ENCODE measurements at regions of chr19 and their contacts with region 1.

Region 1: DNA sequence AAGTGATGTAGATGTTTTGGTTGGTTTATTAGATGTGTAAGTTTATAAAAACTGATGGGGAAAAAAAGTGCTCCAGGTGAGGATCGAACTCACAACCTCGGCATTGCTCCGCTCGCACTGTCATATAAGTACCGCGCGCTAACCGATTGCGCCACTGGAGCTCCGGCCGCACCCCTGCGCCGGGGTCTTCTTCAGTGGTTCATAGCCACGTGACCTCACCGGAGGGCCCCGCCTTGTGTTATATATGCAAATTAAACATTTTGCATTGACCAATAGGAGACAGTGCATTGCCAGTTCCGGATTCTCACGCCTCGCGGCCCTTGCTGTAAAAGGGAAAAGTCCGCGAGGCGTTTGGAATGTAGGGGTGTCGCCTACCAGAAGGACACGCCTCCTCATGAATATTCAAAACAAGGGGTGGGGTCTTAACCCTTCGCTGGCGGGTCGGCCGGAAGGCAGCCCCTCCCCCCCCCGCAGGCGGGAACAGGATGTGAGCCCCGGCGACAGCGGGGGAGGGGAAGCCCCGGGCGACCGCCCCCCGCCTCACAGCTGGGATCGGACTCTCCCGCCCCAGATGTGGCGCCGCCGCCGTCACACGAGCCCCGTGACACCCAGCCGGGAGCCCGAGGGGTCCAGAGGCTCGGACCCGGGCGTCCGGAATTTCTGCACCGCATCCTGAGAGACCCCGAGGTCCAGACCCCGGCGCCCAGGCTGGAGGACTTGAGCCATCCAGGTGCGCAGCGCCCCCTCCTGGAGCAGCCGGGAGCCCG is at the start of gene PLEKHG2:
- DNase-seq: peak; percentile 95
- H3K4me3 Mint-ChIP-seq: peak within 1 kb of the TSS; percentile 96
- H3K27ac Mint-ChIP-seq: peak within 1 kb of the TSS; percentile 86
- H3K4me1 Mint-ChIP-seq: peaks cover 46% of the 10 kb centered on the region
- H3K27me3 Mint-ChIP-seq: no peaks in the 10 kb centered on the region
- total RNA-seq, gene PLEKHG2: 43.9 and 47.3 TPM in 2 replicates

Region 2: DNA sequence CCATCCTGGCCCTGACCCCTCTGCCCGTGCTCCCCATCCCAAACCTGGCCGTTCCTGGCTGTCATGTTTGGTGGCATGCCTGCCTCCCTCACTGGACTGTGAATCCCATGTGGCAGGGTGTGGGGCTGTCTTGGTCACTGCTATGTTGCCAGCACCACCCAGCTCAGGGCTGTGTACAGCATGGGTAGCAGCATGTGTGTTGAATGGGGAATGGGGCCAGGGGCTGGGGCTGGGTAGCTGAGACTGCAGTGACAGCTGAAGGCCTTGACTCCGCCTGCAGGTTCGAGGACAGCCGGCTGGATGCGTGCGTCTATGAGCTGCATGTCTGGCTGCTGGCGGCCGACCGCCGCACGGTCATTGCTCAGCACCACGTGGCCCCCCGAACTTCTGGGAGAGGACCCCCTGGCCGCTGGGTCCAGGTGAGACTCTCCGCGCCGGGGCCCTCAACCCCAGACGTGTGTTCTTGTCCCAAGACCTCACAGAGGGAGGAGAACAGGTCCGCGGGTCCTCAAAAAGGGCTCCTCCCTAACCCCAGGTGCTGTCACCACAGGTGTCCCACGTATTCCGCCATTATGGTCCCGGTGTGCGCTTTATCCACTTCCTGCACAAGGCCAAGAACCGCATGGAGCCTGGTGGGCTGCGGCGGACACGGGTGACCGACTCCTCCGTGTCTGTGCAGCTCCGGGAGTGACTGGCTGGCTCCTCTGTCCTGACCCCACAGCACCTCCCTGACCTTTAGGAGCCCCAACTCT is 212.0 kb before region 1 on chr19:
- intact Hi-C with region 1: no loop called
- DNase-seq: no peak
- H3K4me3 Mint-ChIP-seq: no peak overlapping the region
- H3K27ac Mint-ChIP-seq: no peak overlapping the region
- H3K4me1 Mint-ChIP-seq: peaks cover 6% of the 10 kb centered on the region
- H3K27me3 Mint-ChIP-seq: peaks cover 53% of the 10 kb centered on the region

Region 3: DNA sequence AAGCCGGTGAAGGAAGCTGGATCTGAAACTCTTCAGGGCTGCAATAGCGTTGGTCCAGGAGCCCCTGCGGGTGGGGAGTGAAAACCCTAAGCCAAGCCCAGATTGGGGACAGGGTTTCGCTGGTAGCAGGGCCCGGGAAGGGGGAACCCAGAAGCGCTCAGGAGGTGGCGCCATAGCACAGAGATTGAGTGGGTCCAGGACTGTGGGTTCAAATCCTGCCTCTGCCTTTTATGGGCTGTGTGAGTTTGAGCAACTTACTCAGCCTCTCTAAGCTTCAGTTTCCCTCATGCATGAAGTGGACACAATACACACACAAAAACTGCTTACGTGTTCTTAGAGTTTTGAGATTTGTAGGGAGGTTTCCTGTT is 199.9 kb before region 1 on chr19:
- intact Hi-C with region 1: loop called (anchors 1 kb)
- DNase-seq: peak; percentile 38
- H3K4me3 Mint-ChIP-seq: no peak overlapping the region
- H3K27ac Mint-ChIP-seq: no peak overlapping the region
- H3K4me1 Mint-ChIP-seq: no peaks in the 10 kb centered on the region
- H3K27me3 Mint-ChIP-seq: peaks cover 4% of the 10 kb centered on the region

Region 4: DNA sequence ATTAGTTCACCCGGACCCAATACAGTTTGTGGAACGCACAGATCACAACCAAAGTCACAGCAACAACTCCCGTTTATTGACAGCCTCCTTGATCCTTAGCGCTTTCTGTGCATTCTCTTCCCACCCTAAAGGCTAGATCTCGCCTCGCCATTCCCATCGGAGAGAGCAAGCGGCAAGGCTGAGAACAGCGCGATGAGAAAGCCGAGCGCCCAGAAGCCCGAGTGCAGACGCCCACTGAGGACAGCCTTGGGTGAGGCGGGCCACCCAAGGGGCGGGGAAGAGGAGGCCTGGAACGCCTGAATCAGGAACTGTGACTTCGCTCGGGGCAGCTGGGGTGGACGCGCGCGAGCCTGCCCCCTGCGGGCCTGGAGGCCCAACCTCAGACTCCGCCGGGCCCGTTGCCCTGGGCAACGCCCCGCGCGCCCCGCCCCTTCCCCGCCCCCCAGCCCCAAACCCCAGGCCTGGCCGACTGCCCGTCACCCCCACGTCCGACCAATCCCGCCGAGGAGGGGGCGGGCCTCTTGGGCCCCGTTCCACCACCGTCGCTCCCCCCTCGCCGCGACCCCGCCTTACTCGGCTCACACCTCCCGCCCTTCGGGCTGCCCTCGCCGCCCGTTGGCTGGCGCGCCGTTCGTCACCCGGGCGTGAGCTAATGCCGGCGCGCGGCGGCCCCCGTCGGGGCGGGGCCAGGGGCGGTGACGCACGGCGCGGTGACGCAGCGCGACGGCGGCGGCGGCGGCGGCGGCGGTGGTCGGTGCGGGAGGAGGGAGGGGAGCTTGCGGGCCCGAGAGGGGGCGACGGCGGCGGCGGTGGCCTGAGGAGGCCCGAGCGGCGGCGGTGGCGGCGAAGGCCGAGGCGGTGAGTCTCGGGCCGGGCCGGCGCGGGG is 70.3 kb before region 1 on chr19 and contains the start of gene SAMD4B:
- intact Hi-C with region 1: loop called (anchors 1 kb)
- DNase-seq: peak; percentile 99
- H3K4me3 Mint-ChIP-seq: peak within 1 kb of the TSS; percentile 99
- H3K27ac Mint-ChIP-seq: peak within 1 kb of the TSS; percentile 96
- H3K4me1 Mint-ChIP-seq: peaks cover 73% of the 10 kb centered on the region
- H3K27me3 Mint-ChIP-seq: no peaks in the 10 kb centered on the region
- total RNA-seq, gene SAMD4B: 71.3 and 71.8 TPM in 2 replicates

Region 5: GRCh38 chr19:39379865-39380396 is 32.4 kb before region 1 on chr19:
- intact Hi-C with region 1: no loop called
- DNase-seq: no peak
- H3K4me3 Mint-ChIP-seq: no peak overlapping the region
- H3K27ac Mint-ChIP-seq: peak overlapping the region; percentile 36
- H3K4me1 Mint-ChIP-seq: no peaks in the 10 kb centered on the region
- H3K27me3 Mint-ChIP-seq: no peaks in the 10 kb centered on the region

Region 6: DNA sequence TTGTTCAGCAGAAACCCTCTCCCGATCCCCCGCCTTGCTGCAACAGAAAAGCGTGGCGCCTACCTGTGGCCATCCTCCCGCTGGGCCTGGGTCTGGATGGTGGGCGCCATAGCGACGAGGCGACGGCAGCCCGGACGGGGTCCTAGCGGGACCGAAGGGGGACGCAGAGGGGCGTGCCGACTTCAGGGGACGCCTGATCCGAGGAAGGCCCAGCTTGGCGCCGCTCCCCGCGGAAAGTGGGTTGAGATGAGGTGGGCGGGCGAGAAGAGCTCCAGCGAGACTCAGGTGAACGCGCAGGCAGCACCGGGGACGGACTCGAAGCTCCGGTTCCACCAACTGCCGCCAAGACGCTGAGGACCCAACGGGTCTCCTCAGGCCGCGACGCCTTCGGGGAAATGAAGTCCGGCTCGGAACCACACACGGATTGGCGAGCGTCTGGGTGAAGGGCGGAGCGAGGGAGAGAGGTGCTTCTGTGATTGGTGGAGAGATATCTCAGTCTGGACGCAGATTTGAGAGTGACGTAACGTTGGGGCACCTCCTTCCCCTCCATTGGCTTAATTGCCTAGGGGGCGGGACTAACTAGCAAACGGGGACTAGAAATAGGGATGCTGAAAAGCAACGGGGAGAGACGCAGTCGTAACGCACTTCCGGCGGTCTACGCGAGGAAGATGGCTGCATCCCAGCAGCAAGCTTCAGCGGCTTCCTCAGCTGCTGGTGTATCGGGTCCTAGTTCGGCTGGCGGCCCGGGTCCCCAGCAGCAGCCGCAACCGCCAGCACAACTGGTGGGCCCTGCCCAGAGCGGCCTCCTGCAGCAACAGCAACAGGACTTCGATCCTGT is 21.3 kb before region 1 on chr19 and contains the starts of genes MED29 and PAF1:
- intact Hi-C with region 1: loop called (anchors 1 kb)
- DNase-seq: peak; percentile 95
- H3K4me3 Mint-ChIP-seq: peak within 1 kb of the TSS; percentile 98
- H3K27ac Mint-ChIP-seq: peak within 1 kb of the TSS; percentile 93
- H3K4me1 Mint-ChIP-seq: peaks cover 31% of the 10 kb centered on the region
- H3K27me3 Mint-ChIP-seq: no peaks in the 10 kb centered on the region
- total RNA-seq, gene MED29: 37.5 and 45.8 TPM in 2 replicates
- total RNA-seq, gene PAF1: 54.8 and 57.3 TPM in 2 replicates

Region 7: GRCh38 chr19:39423258-39424086 is 11.2 kb after region 1 on chr19:
- intact Hi-C with region 1: no loop called
- DNase-seq: no peak
- H3K4me3 Mint-ChIP-seq: no peak overlapping the region
- H3K27ac Mint-ChIP-seq: no peak overlapping the region
- H3K4me1 Mint-ChIP-seq: no peaks in the 10 kb centered on the region
- H3K27me3 Mint-ChIP-seq: no peaks in the 10 kb centered on the region

Region 8: GRCh38 chr19:39435499-39436349 is 23.4 kb after region 1 on chr19 and contains the start of gene RPS16:
- intact Hi-C with region 1: loop called (anchors 1 kb)
- DNase-seq: peak; percentile 99
- H3K4me3 Mint-ChIP-seq: peak within 1 kb of the TSS; percentile 99
- H3K27ac Mint-ChIP-seq: peak within 1 kb of the TSS; percentile 99
- H3K4me1 Mint-ChIP-seq: peaks cover 37% of the 10 kb centered on the region
- H3K27me3 Mint-ChIP-seq: no peaks in the 10 kb centered on the region
- total RNA-seq, gene RPS16: 2,440 and 2,532 TPM in 2 replicates

Region 9: DNA sequence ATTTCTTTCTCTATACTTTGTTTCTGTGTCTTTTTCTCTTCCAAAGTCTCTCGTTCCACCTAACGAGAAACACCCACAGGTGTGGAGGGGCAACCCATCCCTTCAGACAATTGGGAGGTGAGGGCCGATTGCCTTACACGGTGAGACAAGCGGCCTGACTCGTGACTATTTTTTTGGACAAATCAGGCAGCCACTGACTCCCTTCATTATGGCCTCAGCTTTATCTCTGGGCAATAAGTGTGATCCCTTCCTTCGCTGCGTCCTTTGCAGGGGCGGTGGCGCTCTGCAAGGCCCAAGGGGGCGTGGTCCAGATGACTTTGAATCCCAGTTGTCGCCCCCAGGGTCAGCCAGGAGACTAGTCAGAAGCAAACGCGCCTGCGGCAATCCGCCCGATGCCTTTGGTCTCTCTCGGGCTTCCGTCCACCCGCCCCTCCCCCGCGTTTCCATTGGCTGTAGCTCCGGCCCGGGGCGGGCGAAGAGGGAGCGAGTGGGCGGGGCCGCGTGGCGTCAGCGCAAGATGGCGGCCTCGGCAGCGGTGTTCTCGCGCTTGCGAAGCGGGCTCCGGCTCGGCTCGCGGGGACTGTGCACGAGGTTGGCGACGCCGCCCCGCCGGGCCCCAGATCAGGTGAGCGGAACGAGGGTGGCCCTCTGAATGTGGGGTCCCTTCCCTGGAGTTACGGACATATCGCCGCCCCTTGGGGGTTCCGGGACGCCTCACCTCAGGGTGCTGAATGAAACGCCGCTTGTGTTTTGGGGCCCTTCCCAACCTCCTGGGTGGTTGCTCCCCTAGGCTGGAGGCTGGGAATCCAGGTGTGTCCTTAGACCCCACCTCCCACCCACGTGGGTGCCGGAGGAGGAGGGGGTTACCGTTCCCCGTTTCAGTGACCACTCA is 68.3 kb after region 1 on chr19 and contains the start of gene TIMM50:
- intact Hi-C with region 1: loop called (anchors 1 kb)
- DNase-seq: peak; percentile 96
- H3K4me3 Mint-ChIP-seq: peak within 1 kb of the TSS; percentile 95
- H3K27ac Mint-ChIP-seq: peak within 1 kb of the TSS; percentile 94
- H3K4me1 Mint-ChIP-seq: peaks cover 28% of the 10 kb centered on the region
- H3K27me3 Mint-ChIP-seq: no peaks in the 10 kb centered on the region
- total RNA-seq, gene TIMM50: 121 and 127 TPM in 2 replicates

Region 10: DNA sequence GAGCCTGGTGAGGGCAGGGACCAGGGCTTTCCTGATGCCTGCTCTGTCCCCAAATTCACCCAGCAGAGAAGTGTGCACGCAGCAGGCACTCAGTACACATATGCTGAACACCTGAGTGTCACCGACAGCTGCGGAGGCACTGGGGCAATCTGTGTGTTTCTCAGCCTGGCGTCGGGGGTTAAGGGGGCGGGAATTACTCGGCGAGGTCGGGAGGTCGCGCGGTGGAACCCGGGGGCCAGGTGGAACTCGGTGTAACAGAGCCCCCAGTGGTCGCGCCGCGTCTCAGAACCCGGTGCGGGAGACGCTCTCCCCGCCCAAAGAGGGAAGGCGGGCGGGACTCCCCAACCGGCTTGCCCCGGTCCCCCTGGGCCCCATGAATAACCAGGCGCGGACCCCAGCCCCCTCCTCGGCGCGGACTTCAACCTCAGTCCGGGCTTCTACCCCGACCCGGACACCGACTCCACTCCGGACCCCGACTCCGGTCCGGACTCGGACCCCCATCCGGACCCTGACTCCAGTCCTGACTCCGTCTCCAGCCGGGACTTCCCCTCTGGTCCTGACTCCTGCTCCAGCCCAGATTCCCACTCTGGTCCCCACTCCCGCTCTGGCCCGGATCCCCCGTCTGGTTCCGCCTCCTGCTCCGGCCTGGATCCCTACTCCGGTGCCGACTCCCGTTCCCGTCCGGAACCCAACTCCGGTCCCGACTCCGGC is 102.7 kb after region 1 on chr19 and contains the start of gene SELENOV:
- intact Hi-C with region 1: no loop called
- DNase-seq: no peak
- H3K4me3 Mint-ChIP-seq: peak within 1 kb of the TSS; percentile 60
- H3K27ac Mint-ChIP-seq: no peak within 1 kb of the TSS
- H3K4me1 Mint-ChIP-seq: peaks cover 9% of the 10 kb centered on the region
- H3K27me3 Mint-ChIP-seq: peaks cover 43% of the 10 kb centered on the region
- total RNA-seq, gene SELENOV: not detected in 2 replicates

Region 11: DNA sequence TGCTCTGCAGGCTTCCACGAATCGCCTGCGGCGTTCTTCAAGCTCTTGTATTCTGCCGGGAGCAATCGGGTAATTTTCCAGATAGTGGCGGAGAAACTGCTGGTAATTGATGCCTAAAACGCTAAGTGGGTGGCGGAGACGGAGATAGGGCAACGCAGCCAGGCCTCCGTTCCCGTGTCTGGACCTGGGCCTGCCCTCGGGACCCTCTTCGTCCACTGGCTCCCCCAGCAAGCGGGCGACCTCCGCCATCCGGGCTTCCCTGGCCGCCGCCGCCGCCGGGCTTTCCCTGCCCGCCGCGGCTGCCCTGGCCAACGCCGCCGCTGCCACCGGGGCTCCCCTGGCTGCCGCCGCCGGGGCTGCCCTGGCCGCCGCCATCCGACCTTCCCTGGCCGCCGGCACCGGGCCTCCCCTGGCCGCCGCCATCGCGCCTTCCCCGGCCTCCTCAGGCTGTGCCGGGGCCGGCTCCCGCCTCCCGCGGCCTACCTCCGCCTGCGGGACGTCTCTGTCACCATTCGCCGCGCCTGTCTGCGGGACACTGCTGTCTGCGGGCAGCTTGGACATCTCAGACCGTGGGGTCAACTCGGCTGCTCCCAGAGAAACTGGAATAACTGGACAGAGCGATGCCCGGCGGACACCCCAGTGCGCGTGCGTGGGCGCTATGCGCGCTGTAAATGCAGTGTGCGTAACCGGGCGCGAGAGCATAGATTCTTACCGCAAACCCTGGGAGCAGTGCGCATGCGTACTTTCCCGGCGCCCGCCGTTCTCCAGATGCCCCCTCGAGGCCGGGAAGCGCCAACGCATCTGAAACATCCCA is 127.4 kb after region 1 on chr19 and contains the start of gene EID2:
- intact Hi-C with region 1: loop called (anchors 1 kb)
- DNase-seq: peak; percentile 92
- H3K4me3 Mint-ChIP-seq: peak within 1 kb of the TSS; percentile 95
- H3K27ac Mint-ChIP-seq: peak within 1 kb of the TSS; percentile 91
- H3K4me1 Mint-ChIP-seq: peaks cover 36% of the 10 kb centered on the region
- H3K27me3 Mint-ChIP-seq: peaks cover 2% of the 10 kb centered on the region
- total RNA-seq, gene EID2: 17.0 and 17.6 TPM in 2 replicates